OCI-LY7 (cell line): ENCODE measurements at regions of chr4 and their contacts with region 1.

Region 1: GRCh38 chr4:6986781-6987587 is 56.2 kb upstream of the TADA2B start:
- DNase-seq: peak; percentile 96
- H3K4me3 ChIP-seq: peak overlapping the region; percentile 78
- H3K27ac ChIP-seq: peak overlapping the region; percentile 62
- H3K4me1 ChIP-seq: peaks cover 38% of the 10 kb centered on the region
- CTCF ChIP-seq: no peak; the same call in 1 of the 2 replicates

Region 2: GRCh38 chr4:6640292-6641163 is 346.5 kb before region 1 on chr4 and contains the start of gene MRFAP1:
- CTCF ChIA-PET with region 1: no interaction called
- POLR2A ChIA-PET with region 1: no interaction called
- intact Hi-C with region 1: loop called (anchors 10 kb)
- DNase-seq: peak; percentile 96
- H3K4me3 ChIP-seq: peak within 1 kb of the TSS; percentile 87
- H3K27ac ChIP-seq: peak within 1 kb of the TSS; percentile 83
- H3K4me1 ChIP-seq: peaks cover 19% of the 10 kb centered on the region
- CTCF ChIP-seq: no peak
- total RNA-seq, gene MRFAP1: 90.8 and 142 TPM in 2 replicates

Region 3: GRCh38 chr4:6909073-6909965 is 77.7 kb before region 1 on chr4 and contains the start of gene TBC1D14:
- CTCF ChIA-PET with region 1: interaction called, 3 read pairs
- POLR2A ChIA-PET with region 1: interaction called, 6 read pairs
- intact Hi-C with region 1: loop called (anchors 1 kb)
- DNase-seq: peak; percentile 89
- H3K4me3 ChIP-seq: peak within 1 kb of the TSS; percentile 73
- H3K27ac ChIP-seq: peak within 1 kb of the TSS; percentile 77
- H3K4me1 ChIP-seq: peaks cover 39% of the 10 kb centered on the region
- CTCF ChIP-seq: peak; percentile 37; the same call in 1 of the 2 replicates
- total RNA-seq, gene TBC1D14: 35.6 and 38.4 TPM in 2 replicates

Region 4: DNA sequence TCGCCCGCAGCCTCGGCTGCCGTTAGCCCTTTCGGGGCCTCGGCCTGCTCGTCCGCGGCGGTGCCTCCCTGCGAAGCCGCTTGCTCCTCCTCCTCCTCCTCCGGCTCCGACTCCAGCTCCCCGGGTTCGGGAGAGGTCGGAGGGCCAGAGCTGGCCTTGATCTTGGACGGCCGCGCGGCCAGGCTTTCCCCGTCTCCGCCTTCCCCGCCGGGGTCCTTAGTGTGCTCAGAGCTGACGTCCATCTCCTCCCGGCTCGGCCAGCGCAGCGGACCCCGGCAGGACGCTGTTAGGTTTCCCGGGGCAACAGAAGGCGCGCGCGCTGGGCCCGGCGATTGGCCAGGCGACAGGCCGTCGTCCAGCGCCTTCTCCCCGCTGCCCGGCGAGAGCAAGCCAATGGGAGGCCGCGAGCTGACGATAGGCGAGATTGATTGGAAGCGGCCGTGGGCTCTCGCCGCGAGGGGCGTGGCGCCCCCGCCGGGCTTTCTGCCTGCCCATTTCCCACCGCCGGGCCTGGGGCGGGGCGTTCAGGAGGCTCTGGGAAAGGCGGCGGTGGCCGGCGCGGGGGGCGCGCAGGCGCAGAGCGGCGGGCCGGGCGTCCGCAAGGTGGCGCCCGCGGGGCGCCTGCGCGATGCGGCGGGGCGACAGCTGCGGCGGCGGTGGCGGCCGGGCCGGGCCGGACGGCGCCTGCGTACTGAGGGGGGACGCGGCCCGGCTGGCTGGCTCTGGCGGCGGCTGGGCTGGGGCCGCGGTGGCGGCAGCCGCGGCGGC is 55.9 kb after region 1 on chr4 and contains the start of gene TADA2B:
- CTCF ChIA-PET with region 1: no interaction called
- POLR2A ChIA-PET with region 1: interaction called, 6 read pairs
- intact Hi-C with region 1: loop called (anchors 2 kb)
- DNase-seq: peak; percentile 93
- H3K4me3 ChIP-seq: peak within 1 kb of the TSS; percentile 99
- H3K27ac ChIP-seq: peak within 1 kb of the TSS; percentile 55
- H3K4me1 ChIP-seq: peaks cover 37% of the 10 kb centered on the region
- CTCF ChIP-seq: peak; percentile 26; the same call in 1 of the 2 replicates
- total RNA-seq, gene TADA2B: 9.9 and 12.8 TPM in 2 replicates

Region 5: GRCh38 chr4:7156761-7157488 is 169.9 kb after region 1 on chr4:
- CTCF ChIA-PET with region 1: no interaction called
- POLR2A ChIA-PET with region 1: no interaction called
- intact Hi-C with region 1: no loop called
- DNase-seq: no peak
- H3K4me3 ChIP-seq: no peak overlapping the region
- H3K27ac ChIP-seq: no peak overlapping the region
- H3K4me1 ChIP-seq: no peaks in the 10 kb centered on the region
- CTCF ChIP-seq: peak; percentile 43

Region 6: GRCh38 chr4:7206911-7207567 is 220.1 kb after region 1 on chr4:
- CTCF ChIA-PET with region 1: no interaction called
- POLR2A ChIA-PET with region 1: no interaction called
- intact Hi-C with region 1: no loop called
- DNase-seq: no peak
- H3K4me3 ChIP-seq: no peak overlapping the region
- H3K27ac ChIP-seq: no peak overlapping the region
- H3K4me1 ChIP-seq: no peaks in the 10 kb centered on the region
- CTCF ChIP-seq: no peak

Region 7: DNA sequence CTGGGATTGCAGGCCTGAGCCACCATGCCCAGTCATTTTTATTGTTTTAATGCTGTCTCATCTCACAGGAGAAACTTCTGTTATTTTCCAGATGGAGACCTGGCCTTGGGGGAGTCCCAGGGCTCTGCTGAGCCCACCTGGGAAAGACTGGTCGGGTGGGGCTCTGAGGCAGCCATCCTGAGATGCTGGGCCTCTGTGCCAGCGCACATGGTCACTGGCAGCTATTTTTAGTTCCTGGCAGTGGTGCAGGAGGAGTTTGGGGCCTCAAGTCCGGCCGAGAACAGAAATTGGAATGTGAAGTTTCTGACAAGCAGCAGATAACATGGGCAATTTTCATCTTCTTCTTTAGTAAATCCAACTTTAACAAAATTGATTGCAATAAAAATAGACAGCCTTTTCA is 249.9 kb after region 1 on chr4:
- CTCF ChIA-PET with region 1: no interaction called
- POLR2A ChIA-PET with region 1: no interaction called
- intact Hi-C with region 1: no loop called
- DNase-seq: no peak
- H3K4me3 ChIP-seq: no peak overlapping the region
- H3K27ac ChIP-seq: no peak overlapping the region
- H3K4me1 ChIP-seq: no peaks in the 10 kb centered on the region
- CTCF ChIP-seq: no peak